Activated T-helper 2 cell treated with anti-CD3 and anti-CD28 coated beads, Interferon-gamma antibody, Interleukin-2, Interleukin-4, amounts not matched to agents 10 μg/mL and 5 μg/mL and 100 μg/mL, durations not matched to agents 14 hours and 24 hours and 36 hours (primary cell): ENCODE measurements at regions of chr7 and their contacts with region 1.

Region 1: GRCh38 chr7:11130012-11130411 is 156.3 kb downstream of the PHF14 start:
- DNase-seq: no peak
- H3K4me3 Mint-ChIP-seq: no peak overlapping the region
- H3K27ac Mint-ChIP-seq: peak overlapping the region; percentile 72
- H3K4me1 Mint-ChIP-seq: peaks cover 56% of the 10 kb centered on the region
- H3K27me3 Mint-ChIP-seq: no peaks in the 10 kb centered on the region

Region 2: GRCh38 chr7:11109659-11110058 is 20.4 kb before region 1 on chr7:
- intact Hi-C with region 1: no loop called
- DNase-seq: no peak
- H3K4me3 Mint-ChIP-seq: no peak overlapping the region
- H3K27ac Mint-ChIP-seq: no peak overlapping the region
- H3K4me1 Mint-ChIP-seq: no peaks in the 10 kb centered on the region
- H3K27me3 Mint-ChIP-seq: no peaks in the 10 kb centered on the region

Region 3: GRCh38 chr7:11141541-11141940 is 11.5 kb after region 1 on chr7:
- intact Hi-C with region 1: no loop called
- DNase-seq: no peak
- H3K4me3 Mint-ChIP-seq: no peak overlapping the region
- H3K27ac Mint-ChIP-seq: no peak overlapping the region
- H3K4me1 Mint-ChIP-seq: no peaks in the 10 kb centered on the region
- H3K27me3 Mint-ChIP-seq: no peaks in the 10 kb centered on the region

Region 4: GRCh38 chr7:11153694-11154093 is 23.7 kb after region 1 on chr7:
- intact Hi-C with region 1: no loop called
- DNase-seq: no peak
- H3K4me3 Mint-ChIP-seq: no peak overlapping the region
- H3K27ac Mint-ChIP-seq: no peak overlapping the region
- H3K4me1 Mint-ChIP-seq: peaks cover 1% of the 10 kb centered on the region
- H3K27me3 Mint-ChIP-seq: no peaks in the 10 kb centered on the region

Region 5: DNA sequence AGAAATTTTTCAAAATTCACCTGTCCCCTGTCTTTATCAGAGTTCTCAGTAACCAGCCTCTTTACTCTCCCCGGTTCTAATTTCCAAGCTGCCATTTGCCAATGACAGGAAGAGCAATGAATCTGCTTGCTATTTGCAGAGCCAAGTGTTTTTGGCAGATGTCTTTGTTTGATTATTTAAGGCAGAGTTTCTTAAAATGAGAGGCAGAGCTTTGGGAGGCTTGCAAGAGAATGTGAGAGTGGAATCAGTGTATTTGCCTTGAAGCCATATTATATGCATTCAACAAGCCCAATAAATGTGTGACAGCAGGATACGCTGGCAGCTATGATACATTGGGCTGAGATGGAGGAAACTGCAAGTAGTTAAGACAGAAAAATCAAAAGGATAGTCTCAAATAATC is 40.2 kb after region 1 on chr7:
- intact Hi-C with region 1: loop called (anchors 2 kb)
- DNase-seq: no peak
- H3K4me3 Mint-ChIP-seq: no peak overlapping the region
- H3K27ac Mint-ChIP-seq: no peak overlapping the region
- H3K4me1 Mint-ChIP-seq: peaks cover 9% of the 10 kb centered on the region
- H3K27me3 Mint-ChIP-seq: no peaks in the 10 kb centered on the region

Region 6: GRCh38 chr7:11332186-11332864 is 202.3 kb after region 1 on chr7:
- intact Hi-C with region 1: loop called (anchors 2 kb)
- DNase-seq: no peak
- H3K4me3 Mint-ChIP-seq: no peak overlapping the region
- H3K27ac Mint-ChIP-seq: no peak overlapping the region
- H3K4me1 Mint-ChIP-seq: peaks cover 18% of the 10 kb centered on the region
- H3K27me3 Mint-ChIP-seq: no peaks in the 10 kb centered on the region